ENCODE measurements at regions of chr12 and their contacts with region 1.

Region 1: GRCh38 chr12:14995583-14996425 is 23.0 kb downstream of the PDE6H start:
- H3K4me3 Mint-ChIP-seq: no peak overlapping the region
- H3K27ac Mint-ChIP-seq: no peak overlapping the region
- H3K4me1 Mint-ChIP-seq: peaks cover 36% of the 10 kb centered on the region
- H3K27me3 Mint-ChIP-seq: no peaks in the 10 kb centered on the region

Region 2: DNA sequence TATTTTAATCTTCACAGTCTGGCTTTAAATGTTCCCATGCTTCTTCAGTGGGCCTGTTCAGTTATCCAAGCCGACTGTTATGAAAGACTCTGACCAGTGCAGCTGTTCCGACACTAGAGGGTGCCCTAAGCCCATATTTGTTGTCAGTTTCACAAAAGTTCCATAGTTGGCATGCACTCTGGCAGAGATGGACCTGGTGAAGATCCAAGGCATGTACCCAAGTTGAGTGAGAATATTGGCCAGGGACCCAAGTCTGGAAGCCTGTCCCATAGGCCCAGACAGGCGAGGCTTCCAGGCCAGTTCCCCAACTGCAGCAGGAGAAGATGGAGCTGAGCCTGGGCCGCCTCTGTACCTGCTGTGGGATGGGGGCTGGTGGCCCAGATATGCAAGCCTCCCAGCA is 272.0 kb before region 1 on chr12:
- intact Hi-C with region 1: loop called (anchors 1 kb)
- H3K4me3 Mint-ChIP-seq: no peak overlapping the region
- H3K27ac Mint-ChIP-seq: no peak overlapping the region
- H3K4me1 Mint-ChIP-seq: no peaks in the 10 kb centered on the region
- H3K27me3 Mint-ChIP-seq: peaks cover 1% of the 10 kb centered on the region

Region 3: GRCh38 chr12:14845350-14845750 is 150.5 kb before region 1 on chr12:
- intact Hi-C with region 1: loop called (anchors 1 kb)
- H3K4me3 Mint-ChIP-seq: no peak overlapping the region
- H3K27ac Mint-ChIP-seq: peak overlapping the region; percentile 57
- H3K4me1 Mint-ChIP-seq: peaks cover 6% of the 10 kb centered on the region
- H3K27me3 Mint-ChIP-seq: no peaks in the 10 kb centered on the region

Region 4: DNA sequence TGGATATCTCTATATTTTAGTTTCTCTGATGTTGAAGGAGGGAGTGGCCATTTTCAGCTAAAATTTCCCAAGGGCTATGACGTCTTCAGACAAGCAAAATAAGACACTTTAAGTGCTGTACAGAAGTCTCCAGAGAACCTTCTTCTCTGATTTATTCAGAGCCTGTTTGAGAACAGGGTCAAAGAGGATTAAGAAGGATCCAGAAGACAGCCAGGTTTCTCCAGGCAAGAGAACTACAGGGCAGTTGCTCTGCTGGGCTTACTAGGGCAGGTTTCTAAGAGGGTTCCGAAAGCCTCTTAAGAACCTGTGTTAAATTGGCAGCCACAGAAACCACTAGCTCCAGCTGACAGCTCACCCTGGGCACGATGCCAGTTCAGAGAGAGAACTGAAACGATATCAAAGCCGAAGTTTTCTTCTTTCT is 111.3 kb before region 1 on chr12:
- intact Hi-C with region 1: no loop called
- H3K4me3 Mint-ChIP-seq: no peak overlapping the region
- H3K27ac Mint-ChIP-seq: peak overlapping the region; percentile 50
- H3K4me1 Mint-ChIP-seq: peaks cover 26% of the 10 kb centered on the region
- H3K27me3 Mint-ChIP-seq: peaks cover 33% of the 10 kb centered on the region

Region 5: DNA sequence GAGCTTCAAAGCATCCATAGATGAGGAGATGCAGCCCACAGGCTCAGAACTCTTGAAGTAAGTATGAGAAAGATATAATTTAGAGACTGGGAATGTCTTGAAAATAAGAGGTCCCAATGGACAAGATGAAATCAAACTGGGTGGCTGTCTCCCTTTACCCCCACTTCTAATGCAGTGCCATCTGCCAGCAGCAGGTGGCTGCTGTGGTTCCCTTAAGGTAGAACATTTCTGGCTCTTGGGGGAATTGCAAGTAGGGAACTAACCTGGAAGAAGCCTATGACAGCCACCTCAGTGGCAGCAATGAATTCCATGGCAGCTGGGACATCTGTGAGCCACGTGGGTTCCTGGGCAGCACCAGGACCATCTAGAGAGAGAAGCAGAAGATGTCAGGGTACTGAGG is 58.1 kb before region 1 on chr12:
- intact Hi-C with region 1: loop called (anchors 5 kb)
- H3K4me3 Mint-ChIP-seq: no peak overlapping the region
- H3K27ac Mint-ChIP-seq: no peak overlapping the region
- H3K4me1 Mint-ChIP-seq: peaks cover 29% of the 10 kb centered on the region
- H3K27me3 Mint-ChIP-seq: no peaks in the 10 kb centered on the region

Region 6: GRCh38 chr12:14948672-14949071 is 47.1 kb before region 1 on chr12:
- intact Hi-C with region 1: loop called (anchors 2 kb)
- H3K4me3 Mint-ChIP-seq: peak overlapping the region; percentile 59
- H3K27ac Mint-ChIP-seq: peak overlapping the region; percentile 94
- H3K4me1 Mint-ChIP-seq: peaks cover 70% of the 10 kb centered on the region
- H3K27me3 Mint-ChIP-seq: no peaks in the 10 kb centered on the region

Region 7: GRCh38 chr12:14981049-14981448 is 14.8 kb before region 1 on chr12:
- intact Hi-C with region 1: loop called (anchors 2 kb)
- H3K4me3 Mint-ChIP-seq: peak overlapping the region; percentile 35
- H3K27ac Mint-ChIP-seq: peak overlapping the region; percentile 85
- H3K4me1 Mint-ChIP-seq: peaks cover 69% of the 10 kb centered on the region
- H3K27me3 Mint-ChIP-seq: no peaks in the 10 kb centered on the region

Measured in dendritic cell treated with granulocyte-macrophage colony-stimulating factor and Interleukin-4, amounts not matched to agents 40 ng/mL and 50 ng/mL, for 4 days (primary cell).